Right ventricle myocardium inferior (tissue), 1 donor: ENCODE measurements at regions of chr2 and their contacts with region 1.

Region 1: DNA sequence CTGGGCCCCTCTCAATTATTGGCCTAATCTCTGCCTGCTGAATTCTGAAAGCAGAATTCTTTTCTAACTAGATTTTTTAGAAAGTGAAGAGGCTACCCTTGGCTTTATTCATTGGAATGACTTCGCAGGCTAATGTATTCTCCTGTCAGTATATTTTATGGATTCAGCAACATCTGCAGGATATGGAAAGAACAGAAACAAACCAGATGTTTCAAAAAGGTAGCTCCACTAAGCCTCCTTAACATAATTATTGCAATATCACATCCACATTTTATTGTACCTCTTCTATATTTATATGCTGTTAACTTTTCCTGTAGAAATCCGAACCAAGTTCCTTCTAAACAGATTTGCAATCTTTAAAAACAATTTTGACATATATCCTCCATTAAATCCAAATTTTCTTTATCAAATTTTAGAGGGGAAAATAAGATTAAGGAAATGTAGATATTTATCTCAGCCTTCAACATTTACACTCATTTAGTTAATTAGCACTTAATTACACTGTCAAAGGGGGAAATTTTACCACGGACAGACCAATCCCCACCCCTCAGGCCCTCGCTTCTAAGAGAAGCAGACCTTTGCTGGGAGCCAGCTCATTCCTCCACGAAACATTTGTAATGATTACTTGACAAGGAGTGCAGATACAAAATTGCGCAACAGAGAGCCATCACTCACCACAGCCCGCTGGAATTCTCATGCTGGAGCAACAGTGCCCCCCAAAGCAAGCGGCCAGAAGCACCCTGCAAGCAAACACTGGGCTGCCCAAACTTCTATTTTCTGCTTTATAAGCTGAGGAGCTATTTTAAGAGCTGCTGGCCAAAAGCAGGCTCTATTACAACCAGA is 253.4 kb downstream of the ETAA1 start:
- DNase-seq: peak; percentile 76
- ATAC-seq: peak; percentile 88

Region 2: DNA sequence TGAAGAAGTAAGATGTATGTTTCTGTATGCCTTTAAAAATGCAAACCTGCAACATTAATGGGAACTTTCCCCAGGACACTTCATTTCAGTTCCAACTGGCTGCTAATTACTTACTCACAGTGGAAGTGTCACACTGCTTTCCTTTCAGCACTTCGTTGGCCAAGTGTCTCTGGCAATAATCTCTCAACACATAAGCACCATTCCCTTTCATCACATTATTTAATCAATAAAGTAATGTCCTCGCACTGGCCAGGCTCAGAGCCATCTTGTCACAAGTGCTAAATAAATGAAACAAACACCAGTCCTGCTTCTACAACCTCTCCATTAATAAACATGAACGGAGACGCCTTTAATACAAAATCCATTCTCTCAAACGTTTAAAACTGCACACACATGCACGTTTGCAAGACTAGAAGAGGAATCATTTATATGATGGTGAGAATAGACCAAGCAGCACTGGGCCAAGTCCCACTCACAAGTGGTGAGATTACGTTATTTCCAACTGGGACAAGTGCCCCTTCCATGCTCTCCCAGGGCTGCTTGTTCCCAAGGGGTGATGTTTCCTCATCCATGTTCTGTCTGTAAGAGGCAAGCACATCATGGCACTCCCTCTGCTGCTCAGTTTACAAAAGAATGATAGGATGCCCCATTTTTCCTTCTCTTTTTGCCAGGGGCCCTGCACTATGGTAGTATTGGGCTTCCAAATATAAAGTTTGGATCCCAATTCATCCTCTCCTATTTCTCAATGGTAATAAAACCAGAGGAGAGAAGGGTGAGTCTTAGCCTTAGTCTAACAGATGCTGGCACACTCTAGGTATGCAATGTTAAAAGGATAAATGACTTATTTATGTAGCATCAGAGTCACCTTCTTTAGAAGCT is 310.1 kb before region 1 on chr2:
- intact Hi-C with region 1: loop called (anchors 1 kb)
- DNase-seq: no peak
- ATAC-seq: peak; percentile 96

Region 3: GRCh38 chr2:67451086-67451832 is 199.3 kb before region 1 on chr2:
- intact Hi-C with region 1: loop called (anchors 5 kb)
- DNase-seq: no peak
- ATAC-seq: no peak

Region 4: DNA sequence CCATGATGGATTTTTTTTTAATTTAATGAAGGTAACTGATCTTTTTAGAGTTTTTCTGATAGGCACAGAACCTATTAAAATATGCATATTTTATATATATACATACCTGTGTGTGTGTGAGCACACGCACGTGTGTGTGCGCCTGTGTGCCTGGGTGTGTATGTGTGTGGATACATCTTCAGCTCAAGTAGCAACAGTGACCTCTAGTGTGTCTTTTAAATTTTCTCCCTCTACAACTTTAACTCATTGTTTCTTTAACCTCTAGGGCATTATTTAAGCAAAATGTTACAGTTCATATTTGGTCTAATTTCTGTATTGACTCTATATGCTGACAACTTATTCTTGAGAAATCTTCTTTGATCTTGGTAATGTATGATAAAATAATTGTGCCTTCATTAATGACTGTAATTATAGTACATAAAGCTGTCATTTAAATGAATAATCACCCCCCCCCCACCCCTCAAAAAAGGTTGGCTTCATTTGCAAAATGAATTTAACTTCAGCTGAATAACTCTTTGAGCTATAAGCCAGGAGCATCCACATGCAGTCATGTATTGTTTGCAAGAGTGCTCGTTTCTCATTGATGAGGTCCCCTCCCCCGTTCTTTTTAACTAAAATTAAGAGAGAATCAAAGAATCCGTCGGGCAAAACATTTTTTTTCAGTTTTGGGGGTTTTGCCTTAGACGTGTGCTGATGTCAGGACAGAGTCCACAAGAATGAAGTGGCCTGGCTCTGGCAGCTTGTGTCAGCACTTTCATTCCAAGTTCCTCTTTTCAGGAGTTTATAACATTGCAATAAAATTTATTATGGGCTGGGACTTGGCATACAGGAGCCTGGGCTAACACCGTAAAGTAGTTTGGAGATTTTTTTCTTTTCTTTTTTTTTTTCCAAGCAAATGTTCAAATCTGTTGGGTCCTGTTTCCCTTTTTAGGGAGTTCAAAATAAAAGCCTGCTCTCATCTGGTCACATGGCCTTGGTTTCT is 173.4 kb before region 1 on chr2:
- intact Hi-C with region 1: loop called (anchors 5 kb)
- DNase-seq: no peak
- ATAC-seq: peak; percentile 76

Region 5: GRCh38 chr2:67561457-67561965 is 89.0 kb before region 1 on chr2:
- intact Hi-C with region 1: loop called (anchors 2 kb)
- DNase-seq: peak; percentile 66
- ATAC-seq: peak; percentile 86

Region 6: DNA sequence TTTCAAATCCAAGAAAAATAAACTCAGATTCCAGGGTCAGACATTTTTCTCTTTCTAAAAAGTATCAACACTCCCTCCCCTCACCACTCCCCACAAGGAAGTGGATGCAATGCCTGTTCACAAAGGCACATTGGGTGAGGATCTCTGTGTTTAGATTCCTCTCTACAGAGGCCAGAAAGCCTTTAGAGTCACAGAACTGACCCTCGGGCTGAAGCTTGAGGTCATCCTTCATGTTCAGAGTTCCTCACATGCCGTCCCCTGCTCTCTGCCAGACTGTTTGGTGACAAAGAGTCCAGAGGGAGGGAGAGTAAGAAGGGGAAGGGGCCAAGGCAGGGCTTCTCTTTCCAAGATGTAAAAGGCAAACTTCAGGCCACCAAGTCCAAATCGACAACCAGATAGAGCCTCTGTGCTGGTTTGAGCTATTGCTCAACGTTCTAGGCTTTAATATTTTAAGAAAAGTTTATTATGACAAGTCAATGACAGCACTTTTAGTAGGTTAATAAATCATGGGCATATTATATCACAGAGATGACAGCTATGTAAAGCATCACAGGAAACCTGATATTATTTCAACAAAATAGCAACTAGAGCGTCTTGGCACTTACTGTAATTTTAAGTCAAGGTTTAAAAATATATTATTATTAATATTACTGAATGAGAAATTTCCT is 16.0 kb after region 1 on chr2:
- intact Hi-C with region 1: no loop called
- DNase-seq: no peak
- ATAC-seq: peak; percentile 90